Esophagus muscularis mucosa (tissue), 4 donors: ENCODE measurements at regions of chr1 and their contacts with region 1.

Region 1: GRCh38 chr1:153510984-153511410 is 24.8 kb downstream of the S100A6 start:
- DNase-seq: no peak
- H3K4me3 ChIP-seq: no peak overlapping the region
- H3K27ac ChIP-seq: peak overlapping the region in 2 of 4 donors; percentile 37 to 39
- H3K4me1 ChIP-seq: peaks cover 22 to 39% (median 35%) of the 10 kb centered on the region in 4 donors
- H3K27me3 ChIP-seq: no peaks in the 10 kb centered on the region
- CTCF ChIP-seq: peak; percentile 81 to 93 (median 90)
- EP300 ChIP-seq: no peak
- POLR2A ChIP-seq: no peak

Region 2: GRCh38 chr1:153532769-153533599 is 22.0 kb after region 1 on chr1:
- intact Hi-C with region 1: loop called (anchors 2 kb)
- DNase-seq: peak; percentile 96
- H3K4me3 ChIP-seq: peak overlapping the region; percentile 70 to 91 (median 85)
- H3K27ac ChIP-seq: peak overlapping the region; percentile 96 to 99 (median 97)
- H3K4me1 ChIP-seq: peaks cover 34 to 49% (median 47%) of the 10 kb centered on the region in 4 donors
- H3K27me3 ChIP-seq: no peaks in the 10 kb centered on the region
- CTCF ChIP-seq: peak; percentile 93 to 97 (median 95)
- EP300 ChIP-seq: no peak
- POLR2A ChIP-seq: no peak

Region 3: DNA sequence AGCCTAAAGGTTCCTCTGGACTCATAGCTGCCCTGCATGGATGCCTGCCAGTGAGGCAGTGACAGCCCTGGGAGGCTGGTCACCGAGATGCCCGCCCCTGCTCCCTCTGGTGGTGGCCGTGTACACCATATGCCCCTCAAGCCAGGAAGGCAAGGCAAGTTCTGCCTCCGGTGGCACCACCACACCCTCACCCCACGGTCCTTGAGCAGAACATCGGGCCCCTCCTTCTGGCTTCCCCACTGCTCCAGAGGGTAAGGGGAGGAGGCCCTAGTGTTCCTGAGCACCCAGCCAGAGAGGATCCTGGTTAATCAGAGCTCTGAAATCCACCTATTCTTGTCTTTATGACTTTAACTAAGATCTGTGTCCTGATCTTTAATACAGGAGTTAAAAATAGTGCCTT is 106.7 kb after region 1 on chr1:
- intact Hi-C with region 1: loop called (anchors 5 kb)
- DNase-seq: no peak
- H3K4me3 ChIP-seq: no peak overlapping the region
- H3K27ac ChIP-seq: peak overlapping the region in 2 of 4 donors; percentile 9 to 46
- H3K4me1 ChIP-seq: peaks cover 20 to 31% (median 28%) of the 10 kb centered on the region in 4 donors
- H3K27me3 ChIP-seq: no peaks in the 10 kb centered on the region
- CTCF ChIP-seq: peak; percentile 33 to 54 (median 52)
- EP300 ChIP-seq: no peak
- POLR2A ChIP-seq: no peak

Region 4: GRCh38 chr1:153749408-153750005 is 238.5 kb after region 1 on chr1:
- intact Hi-C with region 1: loop called (anchors 5 kb)
- DNase-seq: peak; percentile 95
- H3K4me3 ChIP-seq: no peak overlapping the region
- H3K27ac ChIP-seq: peak overlapping the region; percentile 46 to 69 (median 64)
- H3K4me1 ChIP-seq: peaks cover 53 to 73% (median 55%) of the 10 kb centered on the region in 4 donors
- H3K27me3 ChIP-seq: no peaks in the 10 kb centered on the region
- CTCF ChIP-seq: peak; percentile 93 to 98 (median 96)
- EP300 ChIP-seq: no peak
- POLR2A ChIP-seq: no peak